ENCODE measurements at regions of chr6 and their contacts with region 1.

Region 1: DNA sequence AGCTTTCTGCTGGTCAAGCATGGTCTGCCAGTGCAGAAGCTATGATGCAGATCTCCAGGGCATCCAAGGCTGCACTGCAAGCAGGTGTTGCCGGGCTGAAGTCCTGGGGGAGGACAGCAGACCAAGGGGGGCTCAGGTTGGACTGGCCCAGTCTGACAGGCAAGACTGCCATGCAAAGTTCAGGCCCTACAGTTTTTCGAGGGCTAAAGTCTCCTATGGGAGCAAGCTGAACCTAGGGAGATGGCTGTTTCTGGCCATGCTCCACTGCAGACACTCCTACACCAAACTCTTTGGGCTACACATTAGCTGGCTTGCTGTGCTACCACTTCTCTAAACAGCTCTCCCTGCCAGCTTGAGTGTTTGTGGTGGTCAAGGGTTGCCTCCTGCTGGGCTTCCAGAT is 130.0 kb upstream of the SYNCRIP start:
- DNase-seq: no peak
- H3K4me3 ChIP-seq: no peak overlapping the region
- H3K27ac ChIP-seq: no peak overlapping the region
- H3K4me1 ChIP-seq: no peaks in the 10 kb centered on the region
- H3K27me3 ChIP-seq: no peaks in the 10 kb centered on the region
- CTCF ChIP-seq: no peak

Region 2: DNA sequence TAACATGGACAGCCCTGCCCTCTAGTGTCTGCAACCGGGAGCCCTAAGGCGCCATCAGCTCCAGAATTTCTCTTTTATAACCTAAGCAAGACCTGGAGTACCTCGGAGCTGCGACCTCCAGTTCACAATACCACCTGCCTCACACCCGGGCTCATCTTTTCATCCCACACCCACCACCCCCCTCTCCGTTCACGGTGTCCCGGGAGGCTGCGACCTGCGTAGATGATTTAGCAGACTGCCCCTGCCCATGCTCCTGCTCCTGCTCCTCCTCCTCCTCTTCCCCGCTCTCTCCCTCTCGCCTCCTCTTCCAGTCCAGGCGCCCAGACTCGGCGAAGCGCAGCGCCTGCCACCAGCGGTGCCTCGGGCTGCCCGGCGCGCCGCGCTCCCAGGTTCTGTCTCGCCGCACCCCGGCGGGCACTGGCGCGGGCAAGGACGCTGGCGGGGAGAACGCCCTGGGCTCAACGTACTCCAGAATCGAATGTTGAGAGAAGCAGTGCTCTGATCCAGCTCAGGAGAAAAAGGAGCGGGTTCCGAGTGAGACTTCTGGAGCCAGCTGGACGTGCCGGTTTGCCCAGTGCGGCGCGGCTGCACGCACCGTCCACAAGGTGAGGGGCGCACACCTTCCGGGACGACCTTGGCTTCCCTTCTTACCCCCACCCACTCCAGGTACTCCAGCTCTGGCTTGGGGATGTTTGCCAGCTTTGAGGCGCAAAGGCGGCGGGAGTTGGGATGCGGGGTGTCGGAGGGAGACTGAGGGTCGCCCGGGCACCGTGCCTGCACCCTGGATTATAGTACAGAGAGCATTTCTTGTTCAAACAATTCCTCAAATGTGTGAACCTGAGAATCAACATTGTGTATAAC is 1164.8 kb after region 1 on chr6 and contains the start of gene HTR1E:
- CTCF ChIA-PET with region 1: no interaction called
- POLR2A ChIA-PET with region 1: no interaction called
- intact Hi-C with region 1: loop called (anchors 10 kb)
- DNase-seq: peak; percentile 56
- H3K4me3 ChIP-seq: peak within 1 kb of the TSS; percentile 23
- H3K27ac ChIP-seq: no peak within 1 kb of the TSS
- H3K4me1 ChIP-seq: no peaks in the 10 kb centered on the region
- H3K27me3 ChIP-seq: peaks cover 77% of the 10 kb centered on the region
- CTCF ChIP-seq: peak; percentile 69
- total RNA-seq, gene HTR1E: not detected in 2 replicates

Measured in A673 (cell line).